PC-9 (cell line): ENCODE measurements at regions of chr3 and their contacts with region 1.

Region 1: DNA sequence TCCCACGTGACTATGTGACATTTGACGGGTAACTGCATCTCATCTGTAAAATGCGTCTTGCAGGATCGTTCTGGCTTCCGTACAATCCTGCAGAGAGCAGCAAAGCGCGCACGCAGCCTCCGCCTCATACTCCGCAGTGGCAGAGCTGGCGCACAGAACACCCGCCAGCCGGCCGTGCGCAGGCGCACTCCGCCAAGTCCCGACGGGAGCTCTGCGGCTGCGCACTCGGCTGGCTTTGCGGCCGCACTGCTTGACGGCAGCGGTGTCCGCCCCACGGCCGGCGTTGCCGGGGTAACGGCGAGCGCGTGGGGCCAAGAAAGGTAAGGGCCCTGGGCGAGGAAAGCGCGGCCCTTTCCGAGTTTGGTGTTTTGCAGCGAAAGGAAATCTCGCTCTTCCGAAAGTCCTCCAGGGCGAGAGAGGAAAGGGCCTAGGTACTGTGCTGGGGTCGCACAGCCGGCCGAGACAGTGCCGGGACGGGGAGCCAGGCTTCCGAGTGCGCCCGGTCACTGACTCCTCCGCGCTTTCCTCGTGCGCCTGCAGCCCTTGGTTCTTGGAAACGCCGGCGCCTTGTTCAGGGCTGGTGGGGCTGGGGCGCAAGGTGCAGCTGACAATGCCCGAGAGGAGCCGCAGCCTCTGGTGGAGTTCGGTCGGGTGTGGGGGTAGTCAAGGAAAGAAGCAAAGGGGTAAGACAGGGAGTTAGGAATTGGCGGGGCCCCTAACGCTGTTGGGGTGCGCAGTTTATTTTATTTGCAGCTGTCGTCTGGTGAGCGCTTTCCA is at the start of gene TSEN2:
- DNase-seq: peak; percentile 79 to 96
- H3K4me3 ChIP-seq: peak within 1 kb of the TSS; percentile 78
- H3K27ac ChIP-seq: peak within 1 kb of the TSS; percentile 52
- H3K4me1 ChIP-seq: peaks cover 33% of the 10 kb centered on the region
- H3K27me3 ChIP-seq: no peaks in the 10 kb centered on the region
- CTCF ChIP-seq: no peak
- total RNA-seq, gene TSEN2: 22.1 and 26.8 TPM in 2 replicates

Region 2: DNA sequence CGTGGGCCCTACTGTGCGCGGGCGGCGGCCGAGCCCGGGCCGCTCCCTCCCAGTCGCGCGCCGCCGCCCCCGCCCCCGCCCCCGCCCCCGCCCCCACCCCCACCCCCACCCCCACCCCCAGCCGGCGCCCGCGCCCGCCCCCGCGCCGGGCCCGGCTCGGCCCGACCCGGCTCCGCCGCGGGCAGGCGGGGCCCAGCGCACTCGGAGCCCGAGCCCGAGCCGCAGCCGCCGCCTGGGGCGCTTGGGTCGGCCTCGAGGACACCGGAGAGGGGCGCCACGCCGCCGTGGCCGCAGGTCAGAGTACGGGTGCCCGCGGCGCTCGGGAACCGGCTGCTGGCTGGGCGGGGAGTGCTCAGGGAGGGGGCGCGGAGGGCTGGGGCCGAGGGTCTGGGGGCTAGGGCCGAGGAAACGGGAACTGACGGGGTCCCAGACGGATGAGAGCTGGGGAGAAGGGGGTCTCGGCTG is 196.6 kb before region 1 on chr3:
- CTCF ChIA-PET with region 1: no interaction called
- POLR2A ChIA-PET with region 1: no interaction called
- intact Hi-C with region 1: loop called (anchors 2 kb)
- DNase-seq: peak in 1 of 2 experiments; percentile 54
- H3K4me3 ChIP-seq: peak overlapping the region; percentile 85
- H3K27ac ChIP-seq: peak overlapping the region; percentile 91
- H3K4me1 ChIP-seq: peaks cover 26% of the 10 kb centered on the region
- H3K27me3 ChIP-seq: no peaks in the 10 kb centered on the region
- CTCF ChIP-seq: no peak

Region 3: GRCh38 chr3:12349895-12350813 is 134.2 kb before region 1 on chr3:
- CTCF ChIA-PET with region 1: no interaction called
- POLR2A ChIA-PET with region 1: interaction called, 13 read pairs
- intact Hi-C with region 1: no loop called
- DNase-seq: peak in 1 of 2 experiments; percentile 60
- H3K4me3 ChIP-seq: no peak overlapping the region
- H3K27ac ChIP-seq: peak overlapping the region; percentile 3
- H3K4me1 ChIP-seq: peaks cover 59% of the 10 kb centered on the region
- H3K27me3 ChIP-seq: no peaks in the 10 kb centered on the region
- CTCF ChIP-seq: no peak

Region 4: GRCh38 chr3:12444582-12445468 is 39.6 kb before region 1 on chr3:
- CTCF ChIA-PET with region 1: no interaction called
- POLR2A ChIA-PET with region 1: no interaction called
- intact Hi-C with region 1: loop called (anchors 2 kb)
- DNase-seq: peak; percentile 92 to 99
- H3K4me3 ChIP-seq: peak overlapping the region; percentile 47
- H3K27ac ChIP-seq: peak overlapping the region; percentile 100
- H3K4me1 ChIP-seq: peaks cover 76% of the 10 kb centered on the region
- H3K27me3 ChIP-seq: no peaks in the 10 kb centered on the region
- CTCF ChIP-seq: no peak

Region 5: DNA sequence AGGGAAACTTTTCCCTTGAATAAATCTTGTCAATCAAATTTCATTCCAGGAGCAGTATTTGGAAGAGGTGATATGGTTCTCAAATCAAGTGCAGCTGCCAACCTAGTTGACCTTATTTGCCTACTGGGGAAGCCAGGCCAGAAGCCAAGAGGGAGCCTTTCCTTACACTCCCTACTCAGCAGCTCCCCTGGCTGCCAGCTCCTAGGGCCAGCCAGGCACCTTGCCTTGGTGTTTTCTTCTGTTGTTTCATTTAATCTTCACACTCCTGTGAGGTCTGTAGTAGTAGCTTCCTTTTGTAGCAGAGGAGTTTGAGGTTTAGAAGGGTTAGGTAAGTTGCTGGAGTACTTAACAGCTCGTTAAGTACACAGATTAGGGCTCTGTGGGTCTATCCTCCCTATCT is 38.3 kb after region 1 on chr3:
- CTCF ChIA-PET with region 1: no interaction called
- POLR2A ChIA-PET with region 1: no interaction called
- intact Hi-C with region 1: no loop called
- DNase-seq: no peak
- H3K4me3 ChIP-seq: no peak overlapping the region
- H3K27ac ChIP-seq: no peak overlapping the region
- H3K4me1 ChIP-seq: no peaks in the 10 kb centered on the region
- H3K27me3 ChIP-seq: no peaks in the 10 kb centered on the region
- CTCF ChIP-seq: no peak

Region 6: DNA sequence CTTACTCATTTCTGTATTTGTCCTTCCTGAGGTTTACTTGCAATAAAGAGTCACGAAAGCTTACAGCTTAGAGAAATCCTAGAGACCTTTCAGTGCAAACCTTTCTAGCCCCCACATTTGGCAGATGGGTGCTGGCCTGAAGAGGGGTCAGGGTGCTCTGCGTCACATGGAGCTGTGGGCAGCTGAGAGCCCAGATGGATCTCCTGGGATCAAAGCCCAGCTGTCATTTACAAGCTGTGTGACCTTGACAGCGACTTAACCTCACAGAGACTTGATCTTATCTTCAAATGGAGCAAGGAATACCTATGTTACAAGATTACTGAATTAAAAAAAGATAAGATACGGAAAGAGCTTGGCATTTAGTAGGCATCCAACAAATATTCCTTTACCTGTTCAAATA is 203.6 kb after region 1 on chr3:
- CTCF ChIA-PET with region 1: no interaction called
- POLR2A ChIA-PET with region 1: interaction called, 10 read pairs
- intact Hi-C with region 1: no loop called
- DNase-seq: no peak
- H3K4me3 ChIP-seq: no peak overlapping the region
- H3K27ac ChIP-seq: no peak overlapping the region
- H3K4me1 ChIP-seq: 0 out of 2 replicates have a peak, but pooled peaks cover 5% of the 10 kb centered on the region
- H3K27me3 ChIP-seq: no peaks in the 10 kb centered on the region
- CTCF ChIP-seq: no peak